ENCODE measurements at regions of chr20 and their contacts with region 1.

Region 1: DNA sequence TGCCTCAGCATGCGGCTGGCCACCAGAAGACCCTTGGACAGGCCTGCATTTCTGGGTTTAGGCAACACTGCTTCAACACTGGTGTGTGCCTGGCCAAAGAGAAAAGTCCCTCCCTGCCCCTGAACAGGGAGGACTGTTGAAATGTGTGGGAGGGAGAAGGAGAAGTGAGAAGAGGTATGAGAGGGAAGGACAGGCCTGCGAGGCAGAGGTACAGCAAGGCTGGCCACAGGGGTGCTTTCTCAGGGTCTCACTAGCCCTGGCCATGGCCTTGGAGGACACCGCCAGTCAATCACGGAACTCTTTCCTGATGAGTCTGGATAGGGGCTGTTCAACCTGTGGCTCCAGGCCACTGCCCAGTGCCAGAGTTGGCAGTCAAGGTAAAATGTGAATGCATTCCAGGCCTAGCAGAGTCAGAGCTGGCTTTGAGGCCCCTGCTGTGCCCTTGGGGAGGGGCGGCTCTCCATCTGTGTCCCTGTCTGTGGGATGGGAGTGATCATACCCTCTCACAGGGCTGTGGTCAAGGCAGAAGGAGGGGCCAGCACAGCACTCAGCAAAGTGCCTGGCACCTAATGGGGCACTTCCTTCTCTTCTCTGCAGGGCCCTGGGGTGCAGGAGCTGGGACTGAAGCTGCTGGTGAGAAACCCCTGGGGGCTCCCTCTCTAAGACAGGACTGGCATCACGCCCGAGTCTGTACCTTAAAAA is 43.2 kb upstream of the CDH22 start:
- DNase-seq: no peak
- ATAC-seq: no peak

Region 2: GRCh38 chr20:46305331-46305972 is 46.1 kb before region 1 on chr20:
- intact Hi-C with region 1: loop called (anchors 2 kb)
- DNase-seq: no peak
- ATAC-seq: no peak

Region 3: DNA sequence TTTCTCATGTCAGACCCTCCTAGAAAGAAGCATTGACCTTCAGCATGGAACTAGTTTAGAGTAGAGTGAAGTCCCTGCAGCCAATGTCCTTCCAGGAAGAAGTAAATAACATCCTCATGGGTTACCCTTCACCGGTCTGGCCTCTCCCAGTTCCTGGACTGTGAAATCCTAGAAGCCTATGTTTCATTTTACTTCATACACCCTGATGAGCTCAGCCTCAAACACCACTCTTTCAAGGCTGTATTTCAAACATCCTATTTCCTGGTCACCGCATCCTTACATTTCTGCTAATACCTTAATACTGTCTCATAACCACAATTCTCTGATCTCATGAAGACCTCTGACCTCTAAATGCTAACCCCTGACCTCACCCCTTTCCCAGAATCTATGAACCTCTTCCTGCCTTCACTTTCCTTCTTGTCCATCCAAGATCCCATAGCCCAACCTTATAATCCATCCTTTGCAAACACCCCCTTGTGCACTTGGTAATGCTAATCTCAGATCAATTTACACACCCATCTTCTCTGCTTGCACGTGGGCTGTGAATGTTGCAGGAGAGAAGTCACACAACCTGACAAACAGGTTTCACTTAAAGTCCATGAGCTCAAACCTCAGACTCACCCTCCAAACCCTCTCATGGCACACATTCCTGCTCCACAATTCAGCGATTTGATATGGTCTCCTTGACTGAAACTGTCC is 388.1 kb after region 1 on chr20:
- intact Hi-C with region 1: no loop called
- DNase-seq: no peak
- ATAC-seq: no peak